ENCODE measurements at regions of chr16 and their contacts with region 1.

Region 1: DNA sequence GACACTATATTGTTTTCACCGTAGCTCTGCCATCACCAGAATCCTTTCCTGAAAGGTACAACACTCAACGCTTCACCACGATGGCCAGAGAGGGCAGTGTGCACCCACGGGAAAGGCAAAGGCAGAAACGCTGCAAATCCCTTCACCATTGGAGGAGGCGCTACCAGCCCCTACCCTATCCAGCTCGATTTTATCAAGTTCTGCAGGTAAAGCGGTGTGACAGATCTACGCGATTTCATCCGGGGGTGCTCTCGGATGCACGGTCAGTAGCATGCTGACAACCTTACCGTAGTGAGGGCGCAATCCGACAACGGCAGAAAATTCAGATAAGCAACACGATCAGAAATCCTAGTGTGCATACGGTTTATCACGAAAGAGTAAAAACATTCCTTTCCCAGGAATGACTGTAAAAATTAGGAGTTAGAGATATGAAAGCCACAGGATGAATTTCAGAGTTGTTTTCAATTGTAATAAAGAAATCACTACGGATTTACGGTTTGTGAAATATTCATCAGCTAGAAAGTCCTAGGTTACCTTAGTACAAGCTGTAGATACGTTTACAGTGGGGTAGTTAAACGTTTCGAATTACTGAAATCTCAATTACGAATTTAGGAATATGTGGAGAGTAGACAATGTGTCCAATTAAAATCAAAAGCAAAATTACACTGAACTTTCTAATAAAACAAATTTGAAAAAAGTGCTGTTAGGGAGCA is 1.8 kb downstream of the NETO2 start:
- DNase-seq: peak; percentile 80 to 89 (median 83)
- H3K4me3 ChIP-seq: peak overlapping the region; percentile 46 to 52
- H3K4me3 Mint-ChIP-seq: peak overlapping the region; percentile 87 to 93 (median 90)
- H3K27ac ChIP-seq: no peak overlapping the region
- H3K27ac Mint-ChIP-seq: peak overlapping the region; percentile 12 to 93 (median 71)
- H3K4me1 ChIP-seq: peaks cover 27% of the 10 kb centered on the region
- H3K4me1 Mint-ChIP-seq: peaks cover 8 to 21% (median 13%) of the 10 kb centered on the region in 4 donors
- H3K27me3 ChIP-seq: no peaks in the 10 kb centered on the region
- H3K27me3 Mint-ChIP-seq: peaks cover 0 to 3% of the 10 kb centered on the region in 2 donors

Region 2: DNA sequence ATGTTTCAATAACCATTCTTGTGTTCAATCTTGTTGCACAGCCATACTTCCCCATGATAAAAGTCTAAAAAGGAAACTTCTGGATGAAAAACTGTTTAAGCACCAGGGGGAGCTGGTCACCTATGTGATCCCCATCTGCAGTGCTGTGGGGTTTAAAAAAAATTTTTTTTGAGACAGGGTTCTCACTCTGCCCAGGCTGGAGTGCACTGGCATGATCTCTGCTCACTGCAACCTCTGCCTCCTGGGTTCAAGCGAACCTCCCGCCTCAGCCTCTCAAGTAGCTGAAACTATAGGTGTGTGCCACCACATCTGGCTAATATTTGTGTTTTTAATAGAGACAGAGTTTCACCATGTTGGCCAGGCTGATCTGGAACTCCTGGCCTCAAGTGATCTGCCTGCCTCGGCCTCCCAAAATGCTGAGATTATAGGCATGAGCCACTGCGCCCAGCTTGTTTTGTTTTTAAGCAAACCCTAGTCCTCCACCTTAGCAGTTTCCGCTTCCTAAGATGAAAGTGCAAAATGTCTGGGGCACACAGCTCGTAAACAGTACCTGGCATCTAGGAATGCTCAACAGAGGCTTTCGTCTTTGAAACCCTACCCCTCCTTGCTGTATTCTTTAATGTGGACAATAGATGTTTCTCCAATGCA is 193.9 kb before region 1 on chr16:
- CTCF ChIA-PET with region 1: interaction called, 9 read pairs
- POLR2A ChIA-PET with region 1: interaction called, 3 read pairs
- intact Hi-C with region 1: loop called (anchors 1 kb)
- DNase-seq: peak in 4 of 5 donors; percentile 47 to 54 (median 50)
- H3K4me3 ChIP-seq: no peak overlapping the region
- H3K4me3 Mint-ChIP-seq: peak overlapping the region in 2 of 8 donors; percentile 4 to 46
- H3K27ac ChIP-seq: no peak overlapping the region
- H3K27ac Mint-ChIP-seq: peak overlapping the region in 6 of 7 donors; percentile 29 to 68 (median 52)
- H3K4me1 ChIP-seq: peaks cover 15% of the 10 kb centered on the region
- H3K4me1 Mint-ChIP-seq: peaks cover 8 to 27% (median 15%) of the 10 kb centered on the region in 4 donors
- H3K27me3 ChIP-seq: no peaks in the 10 kb centered on the region
- H3K27me3 Mint-ChIP-seq: no peaks in the 10 kb centered on the region

Region 3: GRCh38 chr16:47125757-47126156 is 16.2 kb before region 1 on chr16:
- CTCF ChIA-PET with region 1: interaction called, 37 read pairs
- POLR2A ChIA-PET with region 1: no interaction called
- intact Hi-C with region 1: no loop called
- DNase-seq: no peak
- H3K4me3 ChIP-seq: no peak overlapping the region
- H3K4me3 Mint-ChIP-seq: no peak overlapping the region
- H3K27ac ChIP-seq: no peak overlapping the region
- H3K27ac Mint-ChIP-seq: no peak overlapping the region
- H3K4me1 ChIP-seq: no peaks in the 10 kb centered on the region
- H3K4me1 Mint-ChIP-seq: peaks cover 0 to 3% (median 0%) of the 10 kb centered on the region in 4 donors
- H3K27me3 ChIP-seq: no peaks in the 10 kb centered on the region
- H3K27me3 Mint-ChIP-seq: no peaks in the 10 kb centered on the region

Region 4: DNA sequence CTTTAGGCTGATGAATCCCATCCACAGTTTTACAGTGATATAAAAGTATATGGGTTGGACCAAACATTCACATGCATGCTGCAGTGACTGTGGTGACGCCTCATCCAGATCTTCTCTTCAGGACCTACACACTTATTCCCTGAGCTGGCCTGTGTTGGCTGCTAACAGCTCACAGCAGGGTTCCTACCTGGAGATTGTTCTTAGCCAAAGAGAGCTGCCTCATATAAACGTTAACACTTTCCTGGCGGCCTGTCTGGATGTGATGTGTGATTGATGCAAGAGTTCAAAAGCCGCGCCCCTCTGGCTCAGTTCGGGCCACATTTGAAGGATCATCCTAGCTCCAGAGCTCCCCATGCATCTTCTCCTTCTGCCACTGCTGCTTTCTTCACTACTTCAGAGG is 94.8 kb after region 1 on chr16:
- CTCF ChIA-PET with region 1: no interaction called
- POLR2A ChIA-PET with region 1: no interaction called
- intact Hi-C with region 1: no loop called
- DNase-seq: no peak
- H3K4me3 ChIP-seq: no peak overlapping the region
- H3K4me3 Mint-ChIP-seq: no peak overlapping the region
- H3K27ac ChIP-seq: no peak overlapping the region
- H3K27ac Mint-ChIP-seq: no peak overlapping the region
- H3K4me1 ChIP-seq: no peaks in the 10 kb centered on the region
- H3K4me1 Mint-ChIP-seq: no peaks in the 10 kb centered on the region
- H3K27me3 ChIP-seq: no peaks in the 10 kb centered on the region
- H3K27me3 Mint-ChIP-seq: no peaks in the 10 kb centered on the region

Region 5: GRCh38 chr16:47460711-47461597 is 319.0 kb after region 1 on chr16 and contains the starts of genes ITFG1 and PHKB:
- CTCF ChIA-PET with region 1: interaction called, 22 read pairs
- POLR2A ChIA-PET with region 1: interaction called, 4 read pairs
- intact Hi-C with region 1: loop called (anchors 1 kb)
- DNase-seq: peak; percentile 95 to 98 (median 97)
- H3K4me3 ChIP-seq: peak within 1 kb of the TSS; percentile 74 to 92
- H3K4me3 Mint-ChIP-seq: peak within 1 kb of the TSS; percentile 92 to 99 (median 96)
- H3K27ac ChIP-seq: peak within 1 kb of the TSS; percentile 82
- H3K27ac Mint-ChIP-seq: peak within 1 kb of the TSS; percentile 87 to 99 (median 97)
- H3K4me1 ChIP-seq: peaks cover 56% of the 10 kb centered on the region
- H3K4me1 Mint-ChIP-seq: peaks cover 35 to 72% (median 60%) of the 10 kb centered on the region in 4 donors
- H3K27me3 ChIP-seq: no peaks in the 10 kb centered on the region
- H3K27me3 Mint-ChIP-seq: no peaks in the 10 kb centered on the region
- total RNA-seq, gene ITFG1: 26.1 to 27.7 TPM
- total RNA-seq, gene PHKB: 50.8 to 56.4 TPM

Region 6: GRCh38 chr16:48121276-48121675 is 979.3 kb after region 1 on chr16:
- CTCF ChIA-PET with region 1: interaction called, 12 read pairs
- POLR2A ChIA-PET with region 1: no interaction called
- intact Hi-C with region 1: no loop called
- DNase-seq: no peak
- H3K4me3 ChIP-seq: no peak overlapping the region
- H3K4me3 Mint-ChIP-seq: no peak overlapping the region
- H3K27ac ChIP-seq: no peak overlapping the region
- H3K27ac Mint-ChIP-seq: no peak overlapping the region
- H3K4me1 ChIP-seq: no peaks in the 10 kb centered on the region
- H3K4me1 Mint-ChIP-seq: peaks cover 0 to under 1% (median 0%) of the 10 kb centered on the region in 4 donors
- H3K27me3 ChIP-seq: no peaks in the 10 kb centered on the region
- H3K27me3 Mint-ChIP-seq: peaks cover under 1 to 5% of the 10 kb centered on the region in 2 donors

Region 7: DNA sequence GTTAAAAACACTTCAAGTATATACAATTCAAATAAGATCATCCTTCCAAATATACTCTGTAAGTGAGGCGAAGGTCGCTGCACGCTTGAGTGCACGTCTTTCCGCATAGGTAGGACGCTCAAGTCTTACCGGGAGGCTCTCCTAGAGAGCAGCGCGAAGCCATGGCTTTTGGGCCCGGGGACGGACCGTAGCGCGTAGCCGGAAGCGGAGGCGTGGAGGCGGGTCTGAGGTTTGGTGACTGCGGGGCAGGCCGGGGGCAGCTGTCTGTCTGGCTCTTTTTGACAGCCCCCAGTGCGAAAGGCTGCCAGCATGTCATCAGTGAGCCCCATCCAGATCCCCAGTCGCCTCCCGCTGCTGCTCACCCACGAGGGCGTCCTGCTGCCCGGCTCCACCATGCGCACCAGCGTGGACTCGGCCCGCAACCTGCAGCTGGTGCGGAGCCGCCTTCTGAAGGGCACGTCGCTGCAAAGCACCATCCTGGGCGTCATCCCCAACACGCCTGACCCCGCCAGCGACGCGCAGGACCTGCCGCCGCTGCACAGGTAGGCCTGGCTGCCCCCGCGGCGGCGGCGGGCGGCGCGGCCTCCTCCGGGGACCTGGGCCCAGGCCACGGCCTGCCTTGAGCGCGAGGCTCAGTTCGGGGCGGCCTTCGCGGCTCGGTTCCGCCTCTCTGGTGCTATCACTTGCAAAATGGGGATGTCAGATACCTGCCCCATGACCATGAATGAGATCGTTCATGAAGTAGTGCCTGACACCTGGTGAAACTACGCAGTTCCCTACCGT is 1102.3 kb after region 1 on chr16 and contains the start of gene LONP2:
- CTCF ChIA-PET with region 1: no interaction called
- POLR2A ChIA-PET with region 1: no interaction called
- intact Hi-C with region 1: loop called (anchors 5 kb)
- DNase-seq: peak; percentile 91 to 93 (median 92)
- H3K4me3 ChIP-seq: peak within 1 kb of the TSS; percentile 91 to 94
- H3K4me3 Mint-ChIP-seq: peak within 1 kb of the TSS; percentile 88 to 98 (median 94)
- H3K27ac ChIP-seq: peak within 1 kb of the TSS; percentile 70
- H3K27ac Mint-ChIP-seq: peak within 1 kb of the TSS; percentile 86 to 98 (median 95)
- H3K4me1 ChIP-seq: peaks cover 45% of the 10 kb centered on the region
- H3K4me1 Mint-ChIP-seq: peaks cover 28 to 52% (median 43%) of the 10 kb centered on the region in 4 donors
- H3K27me3 ChIP-seq: no peaks in the 10 kb centered on the region
- H3K27me3 Mint-ChIP-seq: no peaks in the 10 kb centered on the region
- total RNA-seq, gene LONP2: 96.2 to 101 TPM